ENCODE measurements at regions of chr6 and their contacts with region 1.

Region 1: GRCh38 chr6:30821862-30822782 is 62.2 kb upstream of the DDR1 start:
- H3K4me3 ChIP-seq: no peak overlapping the region
- H3K27ac ChIP-seq: no peak overlapping the region
- H3K4me1 ChIP-seq: peaks cover 9% of the 10 kb centered on the region; the same call in 1 of the 2 replicates
- CTCF ChIP-seq: peak; percentile 53; the same call in 1 of the 2 replicates

Region 2: GRCh38 chr6:30742316-30743098 is 79.6 kb before region 1 on chr6 and contains the start of gene FLOT1:
- CTCF ChIA-PET with region 1: interaction called, 5 read pairs
- POLR2A ChIA-PET with region 1: interaction called, 12 read pairs
- H3K4me3 ChIP-seq: peak within 1 kb of the TSS; percentile 67
- H3K27ac ChIP-seq: peak within 1 kb of the TSS; percentile 94
- H3K4me1 ChIP-seq: no peaks in the 10 kb centered on the region
- CTCF ChIP-seq: no peak

Region 3: GRCh38 chr6:30752157-30752927 is 69.8 kb before region 1 on chr6:
- CTCF ChIA-PET with region 1: interaction called, 20 read pairs
- POLR2A ChIA-PET with region 1: interaction called, 9 read pairs
- H3K4me3 ChIP-seq: no peak overlapping the region
- H3K27ac ChIP-seq: peak overlapping the region; percentile 98
- H3K4me1 ChIP-seq: peaks cover 19% of the 10 kb centered on the region
- CTCF ChIP-seq: peak; percentile 37

Region 4: GRCh38 chr6:30775104-30775503 is 47.0 kb before region 1 on chr6:
- CTCF ChIA-PET with region 1: interaction called, 8 read pairs
- POLR2A ChIA-PET with region 1: interaction called, 11 read pairs
- H3K4me3 ChIP-seq: no peak overlapping the region
- H3K27ac ChIP-seq: no peak overlapping the region
- H3K4me1 ChIP-seq: no peaks in the 10 kb centered on the region; the same call in 1 of the 2 replicates
- CTCF ChIP-seq: no peak

Region 5: GRCh38 chr6:30781743-30782424 is 40.2 kb before region 1 on chr6:
- CTCF ChIA-PET with region 1: interaction called, 18 read pairs
- POLR2A ChIA-PET with region 1: interaction called, 4 read pairs
- H3K4me3 ChIP-seq: peak overlapping the region; percentile 33
- H3K27ac ChIP-seq: peak overlapping the region; percentile 65
- H3K4me1 ChIP-seq: peaks cover 10% of the 10 kb centered on the region; the same call in 1 of the 2 replicates
- CTCF ChIP-seq: no peak

Region 6: DNA sequence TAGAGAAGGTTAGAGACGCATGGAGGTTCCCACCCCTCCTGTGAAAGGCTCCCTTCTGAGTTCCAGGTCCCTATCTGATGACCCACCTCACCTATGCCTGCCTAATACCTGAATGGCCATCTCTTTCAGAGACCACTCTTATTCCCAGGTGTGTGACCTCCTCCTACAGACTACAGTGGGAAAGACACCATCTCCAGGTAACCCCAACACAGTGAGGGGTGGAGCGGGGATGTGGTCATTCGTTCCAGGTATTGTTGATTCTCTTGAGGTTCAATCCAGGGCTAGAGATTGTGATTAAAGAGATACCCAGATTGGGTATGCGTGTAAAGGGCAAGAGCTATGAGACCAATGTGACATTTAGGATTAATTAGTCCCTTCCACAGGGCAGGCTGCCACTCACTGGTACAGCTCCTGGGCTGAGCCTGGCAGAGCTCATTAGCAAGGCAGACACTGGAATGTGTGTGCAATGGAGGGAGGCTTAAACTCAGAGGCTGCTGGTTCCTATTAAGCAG is 31.3 kb before region 1 on chr6:
- CTCF ChIA-PET with region 1: interaction called, 24 read pairs
- POLR2A ChIA-PET with region 1: interaction called, 7 read pairs
- H3K4me3 ChIP-seq: no peak overlapping the region
- H3K27ac ChIP-seq: no peak overlapping the region
- H3K4me1 ChIP-seq: no peaks in the 10 kb centered on the region
- CTCF ChIP-seq: no peak

Region 7: DNA sequence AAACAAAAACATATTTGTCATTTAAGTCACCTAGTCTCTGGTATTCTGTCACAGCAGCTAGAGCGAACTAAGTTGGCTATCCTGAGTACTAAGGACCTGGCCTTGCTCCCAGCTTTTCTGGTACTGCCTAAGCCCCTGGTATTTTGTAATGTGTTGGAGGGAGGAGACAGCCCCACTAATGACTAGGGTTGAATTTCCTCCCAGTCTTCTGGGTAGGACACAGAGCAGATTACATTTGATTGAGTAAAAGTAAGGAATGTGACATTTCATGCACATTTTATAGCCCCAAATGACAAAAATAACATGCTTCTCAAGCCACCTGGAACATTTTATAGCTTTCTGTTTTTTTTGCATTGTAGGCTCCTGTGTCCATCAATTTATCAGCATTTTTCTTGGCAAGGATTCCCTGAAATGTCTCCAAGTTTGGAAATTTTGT is 14.3 kb after region 1 on chr6:
- CTCF ChIA-PET with region 1: interaction called, 60 read pairs
- POLR2A ChIA-PET with region 1: no interaction called
- H3K4me3 ChIP-seq: no peak overlapping the region
- H3K27ac ChIP-seq: no peak overlapping the region
- H3K4me1 ChIP-seq: peaks cover 9% of the 10 kb centered on the region; the same call in 1 of the 2 replicates
- CTCF ChIP-seq: no peak

Region 8: DNA sequence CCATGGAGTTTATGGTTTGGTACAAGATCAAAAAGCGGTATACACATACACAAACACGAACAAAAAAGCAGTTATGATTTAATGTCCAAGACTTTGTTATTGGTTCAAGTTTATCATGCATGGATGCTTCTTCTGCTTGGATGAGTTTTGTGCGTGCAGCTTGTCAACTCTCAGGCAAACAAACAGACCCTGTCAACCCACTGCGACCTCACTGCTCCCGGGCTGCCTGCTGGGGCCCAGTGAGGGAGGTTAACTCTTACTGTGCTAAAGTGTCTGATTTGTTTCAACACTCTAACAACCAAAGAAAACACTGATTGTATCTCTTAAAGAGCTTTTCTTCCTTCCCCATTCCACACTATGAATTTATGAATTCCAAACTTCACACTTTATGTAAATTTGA is 35.4 kb after region 1 on chr6:
- CTCF ChIA-PET with region 1: no interaction called
- POLR2A ChIA-PET with region 1: no interaction called
- H3K4me3 ChIP-seq: no peak overlapping the region
- H3K27ac ChIP-seq: no peak overlapping the region
- H3K4me1 ChIP-seq: peaks cover 10% of the 10 kb centered on the region
- CTCF ChIP-seq: no peak

Measured in HEK293 (cell line).